IMR-90 (cell line): ENCODE measurements at regions of chr11 and their contacts with region 1.

Region 1: DNA sequence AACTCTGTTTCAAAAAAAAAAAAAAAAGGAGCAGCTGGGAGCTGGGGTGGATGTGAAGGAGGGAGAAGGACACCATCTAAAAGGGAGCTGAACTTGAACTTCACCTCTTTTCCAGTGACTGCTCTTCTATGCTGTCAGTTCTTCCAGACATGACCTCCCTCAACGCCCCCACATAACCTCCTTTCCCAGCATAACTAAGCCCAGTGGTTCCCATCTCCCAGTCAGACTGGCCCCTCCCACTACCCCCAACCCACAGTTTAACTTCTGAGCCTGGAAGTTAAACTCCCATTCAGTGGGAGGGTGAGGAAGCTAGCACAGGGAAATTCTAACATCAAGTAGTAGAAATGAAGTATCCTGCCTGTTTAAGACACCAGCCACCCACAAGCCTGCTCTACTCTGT is 1.8 kb downstream of the ARHGAP1 start:
- DNase-seq: no peak
- ATAC-seq: no peak
- H3K4me3 ChIP-seq: no peak overlapping the region
- H3K27ac ChIP-seq: no peak overlapping the region
- H3K4me1 ChIP-seq: peaks cover 13% of the 10 kb centered on the region
- H3K27me3 ChIP-seq: no peaks in the 10 kb centered on the region
- CTCF ChIP-seq: no peak
- POLR2A ChIP-seq: no peak
- RAD21 ChIP-seq: no peak

Region 2: GRCh38 chr11:46743693-46744339 is 45.2 kb after region 1 on chr11:
- CTCF ChIA-PET with region 1: no interaction called
- POLR2A ChIA-PET with region 1: interaction called, 11 read pairs
- dilution Hi-C with region 1: no loop called
- in situ Hi-C with region 1: no loop called
- intact Hi-C with region 1: no loop called
- DNase-seq: peak; percentile 39
- ATAC-seq: peak; percentile 81
- H3K4me3 ChIP-seq: no peak overlapping the region
- H3K27ac ChIP-seq: no peak overlapping the region
- H3K4me1 ChIP-seq: peaks cover 4% of the 10 kb centered on the region
- H3K27me3 ChIP-seq: no peaks in the 10 kb centered on the region
- CTCF ChIP-seq: no peak
- POLR2A ChIP-seq: no peak
- RAD21 ChIP-seq: no peak